ENCODE measurements at regions of chr9 and their contacts with region 1.

Region 1: DNA sequence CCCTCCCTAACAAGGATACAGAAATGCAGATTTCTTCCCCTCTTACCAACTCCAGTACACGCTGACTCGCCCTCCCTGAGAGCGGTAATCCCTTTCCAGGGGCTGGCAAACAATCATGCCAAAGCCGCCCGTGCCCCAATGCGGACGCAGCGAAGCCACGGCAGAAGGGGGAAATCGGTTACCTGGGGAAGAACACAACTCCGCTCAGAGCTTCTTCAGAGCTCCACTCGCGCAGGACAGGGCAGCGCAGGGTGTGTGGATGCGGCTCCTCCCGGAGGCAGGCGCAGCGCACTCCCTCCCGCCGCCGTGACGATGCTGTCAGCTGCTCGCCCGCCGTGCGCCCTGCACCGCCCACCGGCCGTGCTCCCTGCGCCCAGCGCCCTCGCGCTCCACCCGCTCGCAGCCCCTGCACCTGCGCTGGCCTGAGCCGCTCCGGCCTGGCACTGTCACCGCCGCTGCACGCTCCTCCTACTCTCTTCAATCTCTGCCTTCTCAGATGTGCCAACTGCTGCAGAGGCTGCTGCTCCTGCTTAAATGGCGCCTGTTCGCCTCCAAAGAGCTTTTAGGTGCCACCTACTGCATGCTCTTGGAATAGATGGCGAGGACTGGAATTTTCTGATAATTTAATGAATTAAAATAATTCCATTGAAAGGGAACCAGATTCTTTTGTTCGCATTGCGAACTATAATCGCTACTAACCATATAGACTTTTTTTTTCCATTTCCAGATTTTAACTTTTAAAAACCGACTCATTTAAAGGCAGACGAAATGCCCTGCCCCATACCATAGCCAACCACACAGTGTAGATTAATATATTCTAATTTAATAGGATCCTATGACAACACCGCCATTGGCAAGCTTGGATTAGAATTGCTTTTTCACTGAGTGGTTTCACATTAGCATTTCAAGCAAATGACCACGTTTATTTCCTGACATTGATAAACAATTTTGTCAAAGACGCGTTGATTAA is at the start of gene DIRAS2:
- DNase-seq: no peak
- ATAC-seq: no peak
- H3K4me3 ChIP-seq: peak within 1 kb of the TSS in 3 of 4 donors; percentile 35 to 52 (median 45)
- H3K27ac ChIP-seq: no peak within 1 kb of the TSS
- H3K4me1 ChIP-seq: no peaks in the 10 kb centered on the region
- H3K27me3 ChIP-seq: peaks cover 0 to 12% (median 9%) of the 10 kb centered on the region in 3 donors
- CTCF ChIP-seq: no peak
- POLR2A ChIP-seq: no peak
- total RNA-seq, gene DIRAS2: not detected

Region 2: DNA sequence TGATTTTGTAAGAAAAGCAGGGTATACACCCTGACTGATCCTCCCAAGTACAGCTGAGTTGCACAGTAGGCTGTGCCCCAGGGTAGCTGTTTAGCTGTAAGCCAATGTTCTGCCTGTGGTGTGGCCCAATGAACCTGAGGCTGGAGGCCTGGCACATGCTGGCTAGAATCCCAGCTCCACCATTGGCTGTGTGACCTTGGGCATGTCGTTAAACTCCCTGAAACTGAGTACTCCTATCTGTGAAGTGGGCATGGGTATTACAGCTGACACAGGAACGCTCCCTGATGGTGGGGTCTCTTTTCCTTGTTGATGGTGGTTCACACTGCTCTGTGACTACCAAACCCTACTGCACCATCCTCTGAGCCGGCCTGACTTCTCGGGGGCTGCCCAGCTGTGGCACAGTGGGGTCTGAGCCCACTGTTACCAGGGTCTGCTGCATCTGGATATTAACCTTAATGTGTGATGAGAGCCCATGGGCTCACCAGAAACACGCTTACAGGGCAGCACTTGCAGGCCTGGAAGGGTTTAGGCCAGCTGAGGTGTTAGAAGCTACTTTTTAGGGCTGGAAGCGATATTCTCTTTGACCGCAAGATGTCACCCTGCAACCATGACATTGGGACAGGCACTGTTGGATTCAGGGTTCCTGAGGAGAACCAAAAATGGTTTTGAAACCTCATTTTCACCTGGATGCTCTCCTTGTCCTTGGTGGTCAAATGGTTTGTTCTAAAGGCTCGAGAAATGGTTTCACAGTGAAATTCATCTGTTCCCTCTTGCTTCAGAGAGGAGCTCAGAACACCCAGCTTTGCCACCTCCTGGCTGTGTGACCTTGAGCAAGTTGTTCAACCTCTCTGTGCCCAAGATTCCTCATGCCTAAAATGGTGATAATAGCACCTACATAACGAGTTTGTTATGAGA is 1044.9 kb before region 1 on chr9:
- in situ Hi-C with region 1: no loop called
- intact Hi-C with region 1: loop called (anchors 5 kb)
- DNase-seq: peak in 1 of 2 donors; percentile 52
- ATAC-seq: peak; percentile 55 to 59
- H3K4me3 ChIP-seq: no peak overlapping the region
- H3K27ac ChIP-seq: no peak overlapping the region
- H3K4me1 ChIP-seq: no peaks in the 10 kb centered on the region
- H3K27me3 ChIP-seq: no peaks in the 10 kb centered on the region
- CTCF ChIP-seq: peak; percentile 73 to 87 (median 82)
- POLR2A ChIP-seq: no peak